ENCODE measurements at regions of chr13 and their contacts with region 1.

Region 1: GRCh38 chr13:114314074-114314912 is at the start of gene CHAMP1:
- DNase-seq: peak; percentile 79 to 96 (median 89)
- ATAC-seq: peak; percentile 94
- H3K4me3 ChIP-seq: peak within 1 kb of the TSS; percentile 42
- H3K4me3 Mint-ChIP-seq: peak within 1 kb of the TSS; percentile 84 to 95 (median 91)
- H3K27ac ChIP-seq: peak within 1 kb of the TSS; percentile 80
- H3K27ac Mint-ChIP-seq: peak within 1 kb of the TSS; percentile 85 to 95 (median 92)
- H3K4me1 ChIP-seq: peaks cover 16% of the 10 kb centered on the region in 2 donors
- H3K4me1 Mint-ChIP-seq: peaks cover 33 to 54% (median 45%) of the 10 kb centered on the region in 7 donors
- H3K27me3 ChIP-seq: no peaks in the 10 kb centered on the region
- H3K27me3 Mint-ChIP-seq: no peaks in the 10 kb centered on the region
- total RNA-seq, gene CHAMP1: 9.1 to 31.3 (median 24.0) TPM

Region 2: DNA sequence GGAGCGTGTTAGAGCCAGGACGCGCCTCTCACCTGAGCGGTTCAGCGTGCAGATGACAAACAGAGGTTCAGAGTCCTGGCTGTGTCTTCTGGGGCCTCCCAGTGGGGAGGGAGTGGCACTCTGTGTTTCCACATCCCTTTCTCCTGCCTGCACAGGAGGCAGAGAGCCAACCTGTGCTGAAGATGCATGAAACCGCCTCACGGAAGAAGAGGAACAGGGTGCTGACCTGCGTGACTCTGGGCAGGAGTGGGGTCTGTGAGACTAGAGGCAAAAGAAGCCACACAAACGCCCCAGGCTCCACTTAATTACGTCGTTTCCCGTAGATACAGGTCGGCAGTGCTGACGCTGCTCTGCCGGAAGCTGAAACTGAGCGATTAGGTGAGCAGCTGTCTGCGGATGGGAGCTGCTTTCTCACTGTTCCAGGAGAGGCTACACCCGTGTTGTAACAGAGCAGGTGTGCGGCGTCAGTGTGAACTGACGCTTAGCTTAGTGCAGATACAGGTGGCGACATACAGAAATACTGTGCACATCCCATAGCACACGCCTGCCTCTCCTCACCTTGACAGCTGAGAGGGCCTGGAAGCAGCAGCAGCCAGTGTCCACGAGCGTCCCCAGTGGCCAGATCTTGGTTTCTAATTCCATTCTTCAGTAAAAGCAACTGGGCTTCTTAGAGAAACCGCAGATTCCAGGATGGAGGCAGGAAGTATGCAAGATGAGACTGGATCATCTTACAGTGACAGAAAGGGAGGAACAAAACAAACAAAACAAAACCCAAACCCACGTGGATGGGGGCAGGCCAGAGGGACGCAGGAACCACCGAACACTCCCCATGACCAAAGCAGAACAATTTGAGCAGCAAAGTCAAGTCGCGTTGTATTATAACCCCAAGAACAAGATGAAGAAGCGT is 1383.0 kb before region 1 on chr13:
- CTCF ChIA-PET with region 1: no interaction called
- POLR2A ChIA-PET with region 1: no interaction called
- intact Hi-C with region 1: no loop called
- DNase-seq: no peak
- ATAC-seq: no peak
- H3K4me3 ChIP-seq: no peak overlapping the region
- H3K4me3 Mint-ChIP-seq: peak overlapping the region in 1 of 10 donors; percentile 68
- H3K27ac ChIP-seq: no peak overlapping the region
- H3K27ac Mint-ChIP-seq: no peak overlapping the region
- H3K4me1 ChIP-seq: no peaks in the 10 kb centered on the region
- H3K4me1 Mint-ChIP-seq: peaks cover 4 to 19% (median 10%) of the 10 kb centered on the region in 7 donors
- H3K27me3 ChIP-seq: peaks cover 5 to 8% of the 10 kb centered on the region in 2 donors
- H3K27me3 Mint-ChIP-seq: peaks cover 6 to 59% (median 48%) of the 10 kb centered on the region in 5 donors

Region 3: GRCh38 chr13:113916330-113916815 is 397.9 kb before region 1 on chr13:
- CTCF ChIA-PET with region 1: no interaction called
- POLR2A ChIA-PET with region 1: no interaction called
- intact Hi-C with region 1: no loop called
- DNase-seq: no peak
- ATAC-seq: peak; percentile 24
- H3K4me3 ChIP-seq: no peak overlapping the region
- H3K4me3 Mint-ChIP-seq: no peak overlapping the region
- H3K27ac ChIP-seq: no peak overlapping the region
- H3K27ac Mint-ChIP-seq: peak overlapping the region in 1 of 9 donors; percentile 6
- H3K4me1 ChIP-seq: no peaks in the 10 kb centered on the region
- H3K4me1 Mint-ChIP-seq: peaks cover 0 to 5% (median 0%) of the 10 kb centered on the region in 7 donors
- H3K27me3 ChIP-seq: peaks cover 0 to 9% of the 10 kb centered on the region in 2 donors
- H3K27me3 Mint-ChIP-seq: peaks cover 19 to 43% (median 33%) of the 10 kb centered on the region in 5 donors

Region 4: GRCh38 chr13:114281351-114282040 is 32.8 kb before region 1 on chr13 and contains the start of gene UPF3A:
- CTCF ChIA-PET with region 1: no interaction called
- POLR2A ChIA-PET with region 1: interaction called, 14 read pairs
- intact Hi-C with region 1: loop called (anchors 1 kb)
- DNase-seq: peak; percentile 83 to 96 (median 93)
- ATAC-seq: peak; percentile 92
- H3K4me3 ChIP-seq: peak within 1 kb of the TSS; percentile 77
- H3K4me3 Mint-ChIP-seq: peak within 1 kb of the TSS; percentile 82 to 98 (median 94)
- H3K27ac ChIP-seq: peak within 1 kb of the TSS; percentile 94
- H3K27ac Mint-ChIP-seq: peak within 1 kb of the TSS; percentile 94 to 99 (median 99)
- H3K4me1 ChIP-seq: peaks cover 29 to 34% of the 10 kb centered on the region in 2 donors
- H3K4me1 Mint-ChIP-seq: peaks cover 31 to 59% (median 45%) of the 10 kb centered on the region in 7 donors
- H3K27me3 ChIP-seq: no peaks in the 10 kb centered on the region
- H3K27me3 Mint-ChIP-seq: no peaks in the 10 kb centered on the region
- total RNA-seq, gene UPF3A: 30.1 to 88.7 (median 62.9) TPM

Region 5: GRCh38 chr13:114339857-114340534 is 25.7 kb after region 1 on chr13:
- CTCF ChIA-PET with region 1: no interaction called
- POLR2A ChIA-PET with region 1: interaction called, 3 read pairs
- intact Hi-C with region 1: loop called in 1 of 2 experiments (anchors 1 kb)
- DNase-seq: peak in 8 of 9 donors; percentile 19 to 64 (median 48)
- ATAC-seq: peak; percentile 78
- H3K4me3 ChIP-seq: no peak overlapping the region
- H3K4me3 Mint-ChIP-seq: peak overlapping the region in 1 of 10 donors; percentile 1
- H3K27ac ChIP-seq: no peak overlapping the region
- H3K27ac Mint-ChIP-seq: peak overlapping the region in 1 of 9 donors; percentile 19
- H3K4me1 ChIP-seq: peaks cover 0 to 17% of the 10 kb centered on the region in 2 donors
- H3K4me1 Mint-ChIP-seq: peaks cover 1 to 15% (median 7%) of the 10 kb centered on the region in 7 donors
- H3K27me3 ChIP-seq: no peaks in the 10 kb centered on the region
- H3K27me3 Mint-ChIP-seq: peaks cover 0 to 25% (median under 1%) of the 10 kb centered on the region in 5 donors

Measured in naive thymus-derived CD4-positive, alpha-beta T cell (primary cell).